ENCODE measurements at regions of chr10 and their contacts with region 1.

Region 1: DNA sequence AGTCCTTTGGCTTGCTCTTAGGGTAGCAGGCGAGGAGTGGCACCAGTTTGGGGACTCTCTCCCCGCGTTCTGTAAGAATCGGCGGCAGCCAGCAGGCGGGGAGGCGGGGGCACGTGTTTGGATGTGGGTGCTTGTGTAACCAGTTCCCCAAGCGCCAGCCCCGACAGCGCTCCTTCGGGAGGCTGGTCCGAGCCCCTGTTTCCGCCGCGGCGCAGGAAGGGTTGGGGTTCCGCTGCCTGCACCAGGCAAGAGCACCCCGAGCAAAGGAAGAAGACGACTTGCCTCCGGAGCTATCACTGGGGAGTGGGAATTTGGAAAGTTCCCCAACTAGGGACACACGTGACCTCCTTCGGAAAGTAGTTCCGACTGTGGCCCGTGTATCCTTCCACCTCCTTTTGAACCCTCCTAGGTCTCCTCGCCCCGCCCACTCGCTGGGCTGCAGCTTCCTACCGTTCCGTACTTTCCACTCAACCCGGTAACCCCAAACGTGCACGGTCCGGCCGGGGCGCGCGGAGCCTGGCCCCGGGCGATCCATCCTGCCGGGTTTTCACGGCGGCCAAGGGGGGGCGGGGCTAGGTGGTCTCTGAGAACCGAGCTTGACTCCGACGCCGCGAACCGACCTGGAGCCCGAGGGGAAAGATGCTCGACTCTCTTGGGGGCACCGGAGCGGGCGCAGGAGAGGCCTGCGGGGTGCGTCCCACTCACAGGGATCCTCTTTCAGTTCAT is 1.2 kb downstream of the KLLN start:
- DNase-seq: peak; percentile 95 to 98
- H3K4me3 ChIP-seq: peak overlapping the region; percentile 83 to 96 (median 90)
- H3K27ac ChIP-seq: peak overlapping the region; percentile 92
- H3K4me1 ChIP-seq: peaks cover 0 to 6% (median 1%) of the 10 kb centered on the region in 4 experiments; a peak in 4 of 7 replicates
- H3K27me3 ChIP-seq: no peaks in the 10 kb centered on the region
- CTCF ChIP-seq: peak in 1 of 3 experiments; percentile 5; a peak in 1 of 4 replicates
- EP300 ChIP-seq: peak in 1 of 2 experiments; percentile 88; a peak in 1 of 3 replicates
- POLR2A ChIP-seq: peak; percentile 47 to 95
- RAD21 ChIP-seq: peak; percentile 30 to 36; a peak in 3 of 4 replicates

Region 2: GRCh38 chr10:87817609-87818504 is 44.3 kb before region 1 on chr10 and contains the start of gene ATAD1:
- CTCF ChIA-PET with region 1: interaction called, 4 read pairs
- POLR2A ChIA-PET with region 1: interaction called, 24 read pairs
- DNase-seq: peak; percentile 59 to 86
- H3K4me3 ChIP-seq: peak within 1 kb of the TSS; percentile 78 to 85 (median 82)
- H3K27ac ChIP-seq: peak within 1 kb of the TSS; percentile 83
- H3K4me1 ChIP-seq: peaks cover 0 to 3% (median 0%) of the 10 kb centered on the region in 4 experiments; a peak in 2 of 7 replicates
- H3K27me3 ChIP-seq: no peaks in the 10 kb centered on the region
- CTCF ChIP-seq: peak in 2 of 3 experiments; percentile 9 to 14; a peak in 1 of 4 replicates
- EP300 ChIP-seq: no peak
- POLR2A ChIP-seq: peak; percentile 82 to 89
- RAD21 ChIP-seq: no peak
- total RNA-seq, gene ATAD1: 35.3 and 35.9 TPM in 2 replicates

Region 3: DNA sequence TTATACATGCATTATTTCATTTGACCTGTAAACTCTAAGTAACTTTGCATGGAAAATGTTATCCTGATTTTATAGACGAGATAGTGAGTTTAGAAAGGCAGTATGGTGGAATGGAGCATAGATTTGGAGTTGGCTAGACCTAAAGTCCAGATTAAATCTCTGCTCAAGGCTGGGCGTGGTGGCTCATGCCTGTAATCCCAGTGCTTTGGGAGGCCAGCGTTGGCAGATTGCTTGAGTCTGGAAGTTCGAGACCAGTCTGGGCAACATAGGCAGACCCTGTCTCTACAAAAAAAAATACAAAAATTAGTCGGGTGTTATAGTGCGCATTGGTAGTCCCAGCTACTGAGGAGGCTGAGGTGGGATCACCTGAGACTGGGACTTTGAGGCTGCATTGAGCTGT is 10.7 kb after region 1 on chr10:
- CTCF ChIA-PET with region 1: interaction called, 4 read pairs
- POLR2A ChIA-PET with region 1: interaction called, 15 read pairs
- DNase-seq: no peak
- H3K4me3 ChIP-seq: no peak overlapping the region
- H3K27ac ChIP-seq: no peak overlapping the region
- H3K4me1 ChIP-seq: peaks cover 0 to 2% (median 0%) of the 10 kb centered on the region in 4 experiments; a peak in 1 of 7 replicates
- H3K27me3 ChIP-seq: no peaks in the 10 kb centered on the region
- CTCF ChIP-seq: no peak
- EP300 ChIP-seq: no peak
- POLR2A ChIP-seq: no peak
- RAD21 ChIP-seq: no peak

Region 4: DNA sequence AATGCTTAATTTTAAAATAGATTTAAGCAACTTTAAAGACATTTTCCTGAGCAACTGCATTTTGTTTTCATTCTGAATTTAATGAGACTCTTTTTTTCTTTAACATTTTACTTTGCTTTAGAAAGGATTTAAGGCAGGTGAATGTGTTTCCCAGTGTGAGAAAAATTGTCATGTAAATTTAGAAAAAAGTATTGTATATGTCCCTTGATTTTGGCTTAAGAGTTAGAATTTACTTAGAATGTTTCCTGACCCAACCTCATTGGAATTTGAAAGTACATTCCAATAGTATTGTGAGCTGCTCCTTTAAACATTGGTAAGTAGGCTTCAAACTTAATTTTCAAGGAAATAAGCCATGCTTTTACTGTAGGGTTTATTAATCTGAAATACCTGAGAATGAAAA is 111.5 kb after region 1 on chr10:
- CTCF ChIA-PET with region 1: no interaction called
- POLR2A ChIA-PET with region 1: interaction called, 15 read pairs
- DNase-seq: peak in 1 of 2 experiments; percentile 9
- H3K4me3 ChIP-seq: peak overlapping the region in 1 of 4 experiments; percentile 45; a peak in 2 of 8 replicates
- H3K27ac ChIP-seq: peak overlapping the region; percentile 26; the same call in 1 of the 2 replicates
- H3K4me1 ChIP-seq: peaks cover 0 to 38% (median 16%) of the 10 kb centered on the region in 4 experiments; a peak in 6 of 7 replicates
- H3K27me3 ChIP-seq: no peaks in the 10 kb centered on the region
- CTCF ChIP-seq: no peak
- EP300 ChIP-seq: no peak
- POLR2A ChIP-seq: no peak
- RAD21 ChIP-seq: no peak

Region 5: GRCh38 chr10:88386821-88387773 is 525.0 kb after region 1 on chr10:
- CTCF ChIA-PET with region 1: interaction called, 19 read pairs
- POLR2A ChIA-PET with region 1: interaction called, 3 read pairs
- DNase-seq: no peak
- H3K4me3 ChIP-seq: no peak overlapping the region
- H3K27ac ChIP-seq: no peak overlapping the region
- H3K4me1 ChIP-seq: peaks cover 0 to 2% (median 0%) of the 10 kb centered on the region in 4 experiments; a peak in 1 of 7 replicates
- H3K27me3 ChIP-seq: no peaks in the 10 kb centered on the region
- CTCF ChIP-seq: no peak
- EP300 ChIP-seq: no peak
- POLR2A ChIP-seq: no peak
- RAD21 ChIP-seq: no peak

Measured in H1 (cell line).